ENCODE measurements at regions of chr5 and their contacts with region 1.

Region 1: GRCh38 chr5:130871346-130872086 is 293.5 kb downstream of the HINT1 start:
- DNase-seq: peak; percentile 49
- H3K4me3 ChIP-seq: no peak overlapping the region
- H3K27ac ChIP-seq: no peak overlapping the region
- H3K4me1 ChIP-seq: no peaks in the 10 kb centered on the region
- H3K27me3 ChIP-seq: no peaks in the 10 kb centered on the region
- CTCF ChIP-seq: peak; percentile 72

Region 2: DNA sequence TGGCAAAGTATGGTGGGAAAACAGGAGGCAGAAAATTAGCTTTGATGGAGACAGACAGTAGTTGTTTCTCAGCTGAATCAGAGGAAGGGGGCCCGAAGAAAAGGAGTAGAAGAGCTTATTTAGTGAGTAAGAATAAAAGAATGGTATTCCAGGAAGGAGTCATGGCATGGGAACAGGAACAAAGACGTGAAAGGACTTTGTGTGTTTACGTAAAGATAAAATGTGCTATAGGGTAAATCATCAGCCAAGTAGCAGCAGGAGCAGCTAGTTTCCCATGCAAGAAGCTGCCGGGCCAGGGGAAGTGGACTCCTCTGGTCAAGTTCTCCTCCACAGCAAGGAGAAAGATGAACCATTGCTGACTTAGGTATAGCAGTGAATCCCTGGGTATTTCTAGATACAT is 160.9 kb before region 1 on chr5:
- intact Hi-C with region 1: no loop called
- DNase-seq: peak; percentile 22
- H3K4me3 ChIP-seq: no peak overlapping the region
- H3K27ac ChIP-seq: no peak overlapping the region
- H3K4me1 ChIP-seq: no peaks in the 10 kb centered on the region
- H3K27me3 ChIP-seq: no peaks in the 10 kb centered on the region
- CTCF ChIP-seq: no peak

Region 3: DNA sequence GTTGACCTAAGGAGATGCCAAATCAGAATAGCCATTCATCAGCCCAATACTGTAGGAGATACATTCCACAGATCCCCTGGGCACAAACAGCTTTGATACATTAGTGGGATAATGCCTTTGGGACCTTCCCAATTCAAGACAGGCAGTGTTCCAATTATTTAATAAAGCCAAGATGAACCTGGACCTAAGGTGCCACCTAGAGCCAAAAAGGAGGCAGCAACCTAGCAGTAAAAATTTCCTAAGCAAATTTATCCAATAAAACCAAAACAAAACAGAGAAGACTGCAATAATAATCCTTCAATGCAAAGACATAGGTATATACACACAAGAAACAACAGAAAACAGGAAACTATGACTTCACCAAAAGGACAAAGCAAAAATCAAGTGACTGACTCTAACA is 40.6 kb after region 1 on chr5:
- intact Hi-C with region 1: loop called (anchors 5 kb)
- DNase-seq: no peak
- H3K4me3 ChIP-seq: no peak overlapping the region
- H3K27ac ChIP-seq: no peak overlapping the region
- H3K4me1 ChIP-seq: no peaks in the 10 kb centered on the region
- H3K27me3 ChIP-seq: no peaks in the 10 kb centered on the region
- CTCF ChIP-seq: peak; percentile 30

Region 4: DNA sequence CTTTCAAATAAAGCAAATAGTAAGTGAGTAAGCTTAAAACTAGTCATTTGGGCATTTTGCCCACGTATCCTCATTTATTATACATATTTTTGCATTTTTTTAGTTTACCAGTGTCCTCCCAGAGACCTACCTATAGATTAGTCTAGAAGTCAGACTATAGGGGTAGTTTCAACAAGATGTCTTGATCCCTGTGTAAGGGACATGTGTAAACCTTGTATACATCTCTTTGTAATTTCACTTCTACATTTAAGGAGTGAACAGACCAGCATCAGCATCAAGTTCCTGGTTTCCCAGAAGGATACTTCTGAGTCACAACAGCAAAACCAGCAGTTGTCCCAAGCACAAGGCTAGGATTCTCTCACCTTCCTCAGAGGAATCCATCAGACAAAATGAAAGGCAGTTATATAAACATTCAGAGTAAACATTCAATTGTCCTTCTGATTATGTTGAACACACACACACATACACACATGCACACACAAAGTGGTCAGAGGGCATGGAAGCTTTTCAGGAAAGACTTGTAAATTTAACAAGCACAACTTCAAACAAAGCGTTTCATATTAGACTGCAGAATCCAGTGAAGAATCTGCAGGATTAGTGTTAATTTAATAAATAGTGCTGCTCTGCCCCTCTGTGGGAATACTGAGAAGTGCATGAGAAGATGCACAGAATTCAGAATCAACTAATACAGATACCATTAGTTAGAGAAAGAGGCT is 238.2 kb after region 1 on chr5:
- intact Hi-C with region 1: loop called (anchors 2 kb)
- DNase-seq: peak; percentile 38
- H3K4me3 ChIP-seq: no peak overlapping the region
- H3K27ac ChIP-seq: no peak overlapping the region
- H3K4me1 ChIP-seq: no peaks in the 10 kb centered on the region
- H3K27me3 ChIP-seq: no peaks in the 10 kb centered on the region
- CTCF ChIP-seq: peak; percentile 61

Region 5: DNA sequence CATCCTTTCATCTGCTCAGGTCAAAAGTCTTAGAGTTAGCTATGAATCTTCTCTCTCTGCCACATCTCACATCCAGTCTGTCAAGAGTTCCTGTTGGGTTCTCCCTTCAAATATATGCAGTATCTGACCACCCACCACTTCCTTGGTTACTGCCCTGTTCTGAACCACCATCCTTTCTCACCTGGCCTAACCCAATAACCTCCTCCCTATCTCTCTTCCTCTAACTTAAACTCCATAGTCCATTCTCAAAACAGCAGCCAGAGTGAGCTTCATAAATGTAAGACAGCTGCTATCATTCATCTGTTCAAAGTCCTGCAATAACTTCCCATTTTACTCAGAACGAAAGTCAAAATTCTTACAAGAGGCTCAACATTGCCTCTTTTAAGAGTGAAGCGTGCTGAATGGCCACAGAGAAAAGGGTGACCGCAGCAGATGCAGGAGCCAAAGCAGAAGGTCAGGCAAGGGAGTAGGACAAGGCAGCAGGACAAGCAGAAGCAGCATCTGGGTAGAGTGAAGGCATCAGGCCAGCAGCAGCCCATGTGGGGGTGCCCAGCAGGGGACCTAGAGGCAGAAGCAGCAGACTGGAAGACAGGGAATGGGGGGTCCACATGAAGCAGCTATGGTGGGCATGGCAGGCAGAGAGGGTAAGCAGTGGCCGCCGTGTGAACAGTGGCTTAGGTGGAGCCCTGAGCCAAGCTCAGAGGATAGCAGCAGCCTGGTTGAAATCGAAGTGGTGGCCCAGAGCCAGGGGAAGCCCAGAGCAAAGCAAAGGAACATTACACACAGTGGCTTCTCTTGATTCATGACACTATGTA is 353.1 kb after region 1 on chr5:
- intact Hi-C with region 1: no loop called
- DNase-seq: peak; percentile 46
- H3K4me3 ChIP-seq: no peak overlapping the region
- H3K27ac ChIP-seq: peak overlapping the region; percentile 83
- H3K4me1 ChIP-seq: peaks cover 5% of the 10 kb centered on the region
- H3K27me3 ChIP-seq: no peaks in the 10 kb centered on the region
- CTCF ChIP-seq: no peak